ENCODE measurements at regions of chr15 and their contacts with region 1.

Region 1: DNA sequence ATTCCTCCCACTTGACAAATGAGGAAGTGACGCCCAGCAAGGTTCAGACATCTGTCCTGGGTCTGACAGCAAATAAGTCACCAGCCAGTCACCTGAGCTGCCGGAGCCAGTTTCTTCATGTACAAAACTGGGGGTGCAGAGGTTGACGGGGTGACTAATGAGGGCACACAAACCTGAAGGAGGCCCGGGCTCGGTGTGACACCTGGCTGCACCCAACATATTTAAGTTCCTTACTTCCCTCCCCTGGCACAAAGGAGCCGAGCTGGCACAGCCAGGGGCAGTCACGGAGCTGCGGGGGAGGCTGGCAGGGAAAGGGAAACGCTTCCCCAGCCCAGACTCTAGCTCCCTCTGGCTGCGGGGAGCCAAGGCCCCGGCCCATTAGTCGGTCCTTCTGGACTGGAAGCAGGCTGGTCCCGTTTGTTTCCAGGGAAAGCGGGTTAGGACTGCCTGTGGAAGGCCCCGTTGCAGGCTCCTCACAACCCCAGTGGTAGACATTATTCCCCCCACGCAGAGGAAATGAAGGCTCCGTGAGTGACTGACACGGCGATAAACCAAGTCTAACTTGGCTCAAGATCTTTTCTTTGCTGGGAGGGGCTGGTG is 2.3 kb downstream of the FBXL22 start:
- DNase-seq: peak; percentile 80 to 81
- ATAC-seq: peak; percentile 48

Region 2: DNA sequence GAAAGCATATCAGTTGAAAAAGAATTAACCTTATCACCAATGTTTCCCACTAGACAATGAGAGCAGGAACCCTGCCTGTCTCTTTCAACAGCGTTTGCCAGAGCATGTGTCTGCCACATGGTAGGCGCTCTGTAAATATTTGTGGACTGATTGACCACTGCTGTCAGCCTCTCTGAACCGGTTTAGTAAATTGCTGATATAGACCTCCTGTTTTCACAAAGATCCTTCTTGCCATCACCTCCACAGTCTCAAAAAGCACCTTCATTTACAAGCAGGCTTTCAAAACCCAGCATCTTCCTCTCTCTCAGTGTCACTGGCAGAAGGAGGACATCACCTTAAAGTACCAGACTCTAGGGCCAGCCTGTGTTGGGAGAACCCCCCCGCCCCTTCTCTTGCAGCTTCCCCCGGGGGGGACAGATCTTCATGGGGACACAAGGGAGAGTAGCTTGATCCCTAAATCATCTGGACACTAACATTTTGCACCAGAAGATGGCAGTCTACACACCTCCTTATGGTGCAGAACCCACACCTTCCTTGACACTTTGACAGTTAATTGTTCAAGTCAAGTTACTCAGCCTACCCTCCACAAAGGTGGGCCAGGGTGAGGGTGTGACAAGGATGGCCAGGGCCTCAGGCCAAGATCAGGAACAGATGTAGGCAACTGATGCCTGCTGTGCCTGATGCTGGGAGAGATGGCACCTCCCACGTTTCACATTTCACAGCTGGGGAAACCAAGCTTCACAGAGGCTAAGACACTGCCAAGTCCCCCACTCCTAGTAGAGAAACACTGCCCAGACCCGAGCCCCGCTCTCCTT is 132.9 kb before region 1 on chr15:
- intact Hi-C with region 1: loop called in 1 of 2 experiments (anchors 5 kb)
- DNase-seq: peak; percentile 35 to 49
- ATAC-seq: peak; percentile 67

Region 3: DNA sequence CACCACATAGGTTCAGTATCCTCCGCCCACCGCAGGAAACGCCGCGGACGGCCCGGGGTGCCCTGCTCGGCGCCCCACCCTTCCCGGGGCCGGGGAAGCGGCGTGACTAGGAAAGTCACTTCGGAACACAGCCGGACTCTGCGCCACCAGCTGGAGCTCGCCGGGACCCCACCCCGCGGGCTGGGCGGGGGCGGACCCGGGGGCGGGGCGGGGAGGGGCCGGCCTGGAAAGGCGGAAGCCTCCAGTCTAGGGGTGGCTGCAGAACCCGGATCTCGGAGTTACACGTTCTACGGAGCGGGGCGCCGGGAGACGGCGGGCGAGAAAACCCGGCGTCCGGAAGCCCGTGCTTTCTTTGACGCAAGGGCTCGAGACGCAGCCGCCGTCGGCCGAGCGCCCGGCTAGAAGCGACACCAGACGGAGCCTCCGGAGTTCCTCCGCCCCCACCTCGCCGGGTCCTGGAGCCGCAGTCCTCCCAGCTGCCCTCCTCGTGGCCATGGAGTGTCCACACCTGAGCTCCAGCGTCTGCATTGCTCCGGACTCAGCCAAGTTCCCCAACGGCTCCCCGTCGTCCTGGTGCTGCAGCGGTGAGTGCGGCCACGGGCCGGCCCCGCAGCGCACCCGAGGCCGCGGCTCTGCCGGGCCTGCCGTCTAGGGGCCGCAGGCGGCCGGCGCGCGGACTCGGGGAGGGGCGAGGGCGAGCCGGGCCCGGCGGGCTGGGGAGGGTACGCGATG is 95.1 kb before region 1 on chr15 and contains the start of gene USP3:
- intact Hi-C with region 1: loop called in 1 of 2 experiments (anchors 5 kb)
- DNase-seq: peak; percentile 94 to 95
- ATAC-seq: peak; percentile 75
- total RNA-seq, gene USP3: 74.7 to 79.9 TPM

Region 4: DNA sequence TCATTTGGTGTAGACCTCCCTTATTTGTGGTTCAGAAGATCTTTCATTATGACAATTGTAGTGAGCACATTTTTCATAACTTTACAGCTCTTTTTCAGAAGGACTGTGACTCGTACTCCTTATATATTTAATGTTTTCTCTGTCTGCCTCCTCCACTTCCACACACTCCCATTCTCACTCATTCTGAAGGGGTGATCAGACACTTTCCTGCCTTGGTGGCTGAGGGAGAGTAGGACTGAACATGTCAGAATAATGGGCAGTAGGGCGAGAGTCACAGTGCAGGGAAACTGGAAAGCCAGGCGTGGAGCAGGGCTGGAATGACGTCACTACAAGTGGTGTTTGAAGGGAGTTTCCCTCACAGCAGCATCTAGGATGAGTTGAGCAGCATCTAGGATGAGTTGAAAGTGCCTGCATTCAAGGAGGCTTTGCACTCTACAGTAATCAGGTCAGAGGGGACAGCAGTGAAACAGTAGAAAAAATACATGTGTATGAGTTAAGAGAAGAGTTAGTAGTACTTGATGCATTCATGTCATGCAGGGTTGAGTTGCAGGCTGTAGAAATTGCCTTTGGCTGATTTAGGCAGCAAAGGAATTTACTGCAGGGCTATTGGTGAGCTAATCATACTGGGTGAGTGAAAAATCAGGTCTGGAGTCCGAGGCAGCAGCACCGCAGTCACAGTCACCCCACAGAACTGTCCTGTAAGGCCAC is 38.6 kb before region 1 on chr15:
- intact Hi-C with region 1: no loop called
- DNase-seq: no peak
- ATAC-seq: no peak